Head of caudate nucleus (tissue), 42 donors: ENCODE measurements at regions of chr2 and their contacts with region 1.

Region 1: GRCh38 chr2:26144953-26145680 is 27.8 kb upstream of the GAREM2 start:
- DNase-seq: peak; percentile 37 to 91 (median 78)

Region 2: DNA sequence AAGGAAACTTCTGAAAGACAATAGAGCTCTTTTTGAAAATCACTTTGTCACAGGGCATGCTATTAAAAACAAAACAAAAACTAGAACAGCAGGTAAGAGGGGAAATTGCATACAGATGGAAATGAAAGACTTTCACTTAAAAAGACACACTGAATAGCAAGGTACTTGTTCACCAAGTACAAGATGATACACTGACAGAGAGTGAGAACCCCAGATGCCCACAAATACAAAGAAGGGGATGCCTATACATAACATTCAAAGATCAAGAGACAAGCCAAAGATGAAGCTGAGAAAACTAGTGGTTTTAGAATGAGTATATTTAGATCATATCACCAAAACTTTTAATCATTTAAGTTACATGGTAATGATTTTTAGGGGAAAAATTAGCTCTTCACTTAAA is 327.5 kb before region 1 on chr2:
- intact Hi-C with region 1: no loop called
- DNase-seq: no peak

Region 3: GRCh38 chr2:25951071-25951547 is 194.0 kb before region 1 on chr2:
- intact Hi-C with region 1: loop called (anchors 5 kb)
- DNase-seq: peak; percentile 81 to 95 (median 92)

Region 4: GRCh38 chr2:25991965-25992364 is 153.2 kb before region 1 on chr2:
- intact Hi-C with region 1: loop called (anchors 2 kb)
- DNase-seq: no peak

Region 5: DNA sequence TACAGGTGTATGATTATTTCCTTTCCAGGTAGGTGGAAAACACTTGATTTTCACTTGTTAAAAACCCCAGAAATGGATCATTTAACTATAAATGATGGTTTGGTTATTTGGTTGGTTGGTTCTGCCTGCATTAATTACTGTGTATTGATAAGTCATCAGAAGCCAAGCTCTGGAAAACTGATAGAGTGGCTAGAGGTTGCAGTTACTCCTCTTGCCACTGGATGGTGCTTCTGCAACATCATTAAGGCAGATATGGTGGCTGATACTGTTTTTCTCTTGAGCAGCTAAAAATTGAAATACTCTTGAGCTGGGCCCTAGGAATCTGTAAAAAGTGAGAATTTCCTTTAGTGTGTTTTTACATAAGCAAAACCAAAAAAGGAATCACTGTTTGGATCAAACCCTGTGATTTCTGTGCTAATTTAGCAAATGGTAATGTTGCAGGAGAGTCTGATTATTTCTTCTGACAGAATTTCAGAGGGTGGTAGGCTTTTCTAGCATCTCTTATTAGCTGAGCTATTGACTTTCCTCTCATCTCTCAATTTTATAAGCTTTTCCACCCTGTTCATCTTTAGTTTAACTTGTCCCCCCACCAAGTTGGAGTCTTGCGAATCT is 57.0 kb before region 1 on chr2:
- intact Hi-C with region 1: loop called (anchors 5 kb)
- DNase-seq: peak in 28 of 42 donors; percentile 21 to 77 (median 46)

Region 6: GRCh38 chr2:26848336-26849055 is 703.4 kb after region 1 on chr2:
- intact Hi-C with region 1: no loop called
- DNase-seq: peak in 32 of 42 donors; percentile 4 to 65 (median 34)